Sciatic nerve (tissue), 2 donors: ENCODE measurements at regions of chr12 and their contacts with region 1.

Region 1: GRCh38 chr12:107402041-107403022 is 283.3 kb upstream of the PWP1 start:
- DNase-seq: no peak
- ATAC-seq: peak; percentile 51

Region 2: DNA sequence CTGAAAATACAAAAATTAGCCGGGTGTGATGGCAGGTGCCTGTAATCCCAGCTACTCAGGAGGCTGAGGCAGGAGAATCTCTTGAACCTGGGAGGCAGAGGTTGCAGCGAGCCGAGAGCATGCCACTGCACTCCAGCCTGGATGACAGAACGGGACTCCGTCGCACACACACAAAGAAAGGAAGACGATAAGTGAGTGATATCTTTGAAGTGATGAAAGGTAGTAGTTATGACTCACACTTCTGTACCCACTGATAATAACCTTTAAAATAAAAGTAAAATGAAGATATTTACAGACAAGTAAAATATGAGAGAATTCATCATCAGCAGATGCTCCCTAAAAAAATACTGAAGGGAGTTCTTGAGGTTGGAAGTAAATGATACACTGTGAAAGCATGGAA is 137.7 kb before region 1 on chr12:
- intact Hi-C with region 1: loop called (anchors 10 kb)
- DNase-seq: no peak
- ATAC-seq: no peak

Region 3: DNA sequence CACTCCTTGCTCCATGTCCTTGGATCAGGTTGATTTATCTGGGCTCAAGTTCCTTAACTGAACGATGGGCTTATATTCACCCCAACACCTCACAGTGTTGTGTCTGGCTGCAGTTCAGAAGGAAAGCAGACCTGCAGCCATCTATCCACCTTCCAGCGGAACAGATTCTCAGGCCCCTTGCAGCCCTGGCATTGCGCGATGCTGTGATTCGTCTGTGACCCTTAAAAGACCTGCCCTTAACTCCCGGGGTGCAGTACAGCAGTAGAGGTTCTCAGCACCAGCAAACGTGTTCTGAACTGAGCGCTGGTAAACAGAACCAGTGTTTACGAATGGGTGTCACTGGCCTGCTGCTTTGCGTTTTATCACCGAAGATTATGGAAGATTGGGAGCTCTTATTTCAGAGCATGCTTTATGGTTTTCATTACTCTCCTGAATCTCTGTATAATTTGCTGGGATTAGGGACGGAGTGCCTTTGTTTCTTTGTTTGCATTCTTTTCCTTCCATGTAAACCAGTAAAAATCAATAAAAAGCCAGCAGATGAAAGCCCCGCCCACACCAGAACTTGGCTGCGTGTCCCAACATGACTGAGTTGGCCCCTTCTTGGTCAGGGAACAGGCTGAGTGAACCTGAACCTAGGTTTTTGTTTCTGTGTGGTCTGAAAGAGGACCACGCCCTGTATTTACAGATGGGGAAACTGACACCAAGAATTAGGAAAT is 22.3 kb before region 1 on chr12:
- intact Hi-C with region 1: no loop called
- DNase-seq: no peak
- ATAC-seq: peak; percentile 45